Dendritic cell treated with granulocyte-macrophage colony-stimulating factor and Interleukin-4, amounts not matched to agents 40 ng/mL and 50 ng/mL, for 4 days (primary cell): ENCODE measurements at regions of chrX and their contacts with region 1.

Region 1: GRCh38 chrX:39859991-39860861 is 237.5 kb downstream of the BCOR start:
- H3K4me3 Mint-ChIP-seq: no peak overlapping the region
- H3K27ac Mint-ChIP-seq: no peak overlapping the region
- H3K4me1 Mint-ChIP-seq: peaks cover 17% of the 10 kb centered on the region
- H3K27me3 Mint-ChIP-seq: peaks cover 1% of the 10 kb centered on the region

Region 2: DNA sequence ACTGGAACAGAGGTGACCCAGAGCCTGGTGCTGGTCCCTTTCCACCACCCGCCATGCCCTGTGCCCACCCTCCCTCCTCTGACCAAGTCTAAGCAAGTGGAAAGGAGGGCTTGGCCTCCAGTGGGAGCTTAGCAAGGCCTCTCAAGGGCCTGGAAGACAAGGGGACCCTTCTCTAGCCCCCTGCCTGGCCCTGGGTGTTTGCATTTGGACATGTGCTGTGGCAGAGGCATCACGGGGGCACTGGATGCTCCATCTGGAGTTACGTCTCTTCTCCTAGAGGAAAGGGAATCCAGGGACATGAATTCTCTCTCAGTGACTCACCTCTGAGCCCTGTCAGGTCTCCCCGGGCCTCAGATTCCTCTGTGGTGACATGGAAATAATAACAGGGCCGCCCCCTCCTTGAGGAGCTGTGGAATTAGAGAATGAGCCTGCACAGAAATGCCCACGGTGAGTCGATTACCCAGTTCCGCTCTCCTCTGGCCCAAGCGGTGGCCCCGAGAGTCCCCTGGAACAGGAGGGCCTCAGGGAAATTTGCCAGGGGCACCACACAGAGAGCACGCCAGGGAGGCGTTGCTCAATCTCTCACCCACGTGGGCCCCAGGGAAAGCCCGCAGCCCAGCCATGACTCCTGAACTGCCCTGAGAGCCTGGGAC is 47.9 kb after region 1 on chrX:
- intact Hi-C with region 1: loop called (anchors 10 kb)
- H3K4me3 Mint-ChIP-seq: peak overlapping the region; percentile 53
- H3K27ac Mint-ChIP-seq: no peak overlapping the region
- H3K4me1 Mint-ChIP-seq: peaks cover 38% of the 10 kb centered on the region
- H3K27me3 Mint-ChIP-seq: peaks cover 27% of the 10 kb centered on the region